WTC11 (cell line): ENCODE measurements at regions of chr17 and their contacts with region 1.

Region 1: GRCh38 chr17:64129764-64130558 is at the start of gene ERN1:
- DNase-seq: peak; percentile 89
- ATAC-seq: peak; percentile 89
- H3K4me3 Mint-ChIP-seq: peak within 1 kb of the TSS; percentile 66
- H3K27ac Mint-ChIP-seq: no peak within 1 kb of the TSS
- H3K4me1 Mint-ChIP-seq: peaks cover 13% of the 10 kb centered on the region
- H3K27me3 Mint-ChIP-seq: peaks cover 37% of the 10 kb centered on the region
- CTCF ChIP-seq: no peak
- total RNA-seq, gene ERN1: 6.5 to 8.6 TPM (median 7.6 TPM) in 3 replicates

Region 2: GRCh38 chr17:63904316-63904715 is 225.6 kb before region 1 on chr17:
- CTCF ChIA-PET with region 1: interaction called, 11 read pairs
- POLR2A ChIA-PET with region 1: no interaction called
- DNase-seq: no peak
- ATAC-seq: no peak
- H3K4me3 Mint-ChIP-seq: no peak overlapping the region
- H3K27ac Mint-ChIP-seq: no peak overlapping the region
- H3K4me1 Mint-ChIP-seq: peaks cover 18% of the 10 kb centered on the region
- H3K27me3 Mint-ChIP-seq: peaks cover 6% of the 10 kb centered on the region; the same call in 1 of the 2 replicates
- CTCF ChIP-seq: no peak

Region 3: GRCh38 chr17:63961355-63962212 is 168.4 kb before region 1 on chr17:
- CTCF ChIA-PET with region 1: interaction called, 12 read pairs
- POLR2A ChIA-PET with region 1: interaction called, 5 read pairs
- DNase-seq: peak; percentile 100
- ATAC-seq: peak; percentile 90
- H3K4me3 Mint-ChIP-seq: peak overlapping the region; percentile 76
- H3K27ac Mint-ChIP-seq: 0 out of 2 replicates have a peak overlapping the region, but pooled peaks have one; percentile 70
- H3K4me1 Mint-ChIP-seq: peaks cover 20% of the 10 kb centered on the region
- H3K27me3 Mint-ChIP-seq: no peaks in the 10 kb centered on the region; the same call in 1 of the 2 replicates
- CTCF ChIP-seq: no peak

Region 4: GRCh38 chr17:64020056-64020766 is 109.8 kb before region 1 on chr17 and contains the start of gene ICAM2:
- CTCF ChIA-PET with region 1: interaction called, 380 read pairs
- POLR2A ChIA-PET with region 1: interaction called, 4 read pairs
- DNase-seq: no peak
- ATAC-seq: peak; percentile 63
- H3K4me3 Mint-ChIP-seq: peak within 1 kb of the TSS; percentile 41
- H3K27ac Mint-ChIP-seq: no peak within 1 kb of the TSS; the same call in 1 of the 2 replicates
- H3K4me1 Mint-ChIP-seq: peaks cover 10% of the 10 kb centered on the region
- H3K27me3 Mint-ChIP-seq: peaks cover 2% of the 10 kb centered on the region; the same call in 1 of the 2 replicates
- CTCF ChIP-seq: no peak
- total RNA-seq, gene ICAM2: 0.33 to 0.57 TPM (median 0.44 TPM) in 3 replicates

Region 5: DNA sequence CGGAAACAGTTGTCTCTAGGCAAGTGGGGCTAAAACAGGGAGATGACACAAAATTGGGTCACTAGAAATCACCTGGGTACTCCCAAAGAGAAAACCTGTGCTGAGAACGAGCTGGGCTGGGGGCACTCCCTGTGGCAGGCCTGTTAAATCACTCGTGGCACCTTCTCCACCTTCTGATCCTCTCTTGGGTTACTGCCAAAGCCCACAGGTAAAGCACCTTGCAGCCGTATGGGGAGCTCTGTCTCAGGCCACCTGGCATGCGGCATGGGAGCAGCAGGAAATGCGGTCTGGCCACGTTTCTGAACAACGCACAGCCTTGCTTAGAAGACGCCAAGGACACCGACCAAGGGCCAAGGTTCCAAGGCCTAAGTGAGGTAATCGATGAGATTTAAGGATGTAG is 88.0 kb before region 1 on chr17:
- CTCF ChIA-PET with region 1: interaction called, 14 read pairs
- POLR2A ChIA-PET with region 1: no interaction called
- DNase-seq: no peak
- ATAC-seq: no peak
- H3K4me3 Mint-ChIP-seq: no peak overlapping the region
- H3K27ac Mint-ChIP-seq: peak overlapping the region; percentile 4; the same call in 1 of the 2 replicates
- H3K4me1 Mint-ChIP-seq: no peaks in the 10 kb centered on the region
- H3K27me3 Mint-ChIP-seq: no peaks in the 10 kb centered on the region
- CTCF ChIP-seq: no peak

Region 6: GRCh38 chr17:64145757-64146417 is 15.9 kb after region 1 on chr17:
- CTCF ChIA-PET with region 1: interaction called, 19 read pairs
- POLR2A ChIA-PET with region 1: interaction called, 14 read pairs
- DNase-seq: peak; percentile 93
- ATAC-seq: peak; percentile 85
- H3K4me3 Mint-ChIP-seq: no peak overlapping the region
- H3K27ac Mint-ChIP-seq: no peak overlapping the region
- H3K4me1 Mint-ChIP-seq: peaks cover 23% of the 10 kb centered on the region
- H3K27me3 Mint-ChIP-seq: no peaks in the 10 kb centered on the region
- CTCF ChIP-seq: no peak